ENCODE measurements at regions of chr17 and their contacts with region 1.

Region 1: DNA sequence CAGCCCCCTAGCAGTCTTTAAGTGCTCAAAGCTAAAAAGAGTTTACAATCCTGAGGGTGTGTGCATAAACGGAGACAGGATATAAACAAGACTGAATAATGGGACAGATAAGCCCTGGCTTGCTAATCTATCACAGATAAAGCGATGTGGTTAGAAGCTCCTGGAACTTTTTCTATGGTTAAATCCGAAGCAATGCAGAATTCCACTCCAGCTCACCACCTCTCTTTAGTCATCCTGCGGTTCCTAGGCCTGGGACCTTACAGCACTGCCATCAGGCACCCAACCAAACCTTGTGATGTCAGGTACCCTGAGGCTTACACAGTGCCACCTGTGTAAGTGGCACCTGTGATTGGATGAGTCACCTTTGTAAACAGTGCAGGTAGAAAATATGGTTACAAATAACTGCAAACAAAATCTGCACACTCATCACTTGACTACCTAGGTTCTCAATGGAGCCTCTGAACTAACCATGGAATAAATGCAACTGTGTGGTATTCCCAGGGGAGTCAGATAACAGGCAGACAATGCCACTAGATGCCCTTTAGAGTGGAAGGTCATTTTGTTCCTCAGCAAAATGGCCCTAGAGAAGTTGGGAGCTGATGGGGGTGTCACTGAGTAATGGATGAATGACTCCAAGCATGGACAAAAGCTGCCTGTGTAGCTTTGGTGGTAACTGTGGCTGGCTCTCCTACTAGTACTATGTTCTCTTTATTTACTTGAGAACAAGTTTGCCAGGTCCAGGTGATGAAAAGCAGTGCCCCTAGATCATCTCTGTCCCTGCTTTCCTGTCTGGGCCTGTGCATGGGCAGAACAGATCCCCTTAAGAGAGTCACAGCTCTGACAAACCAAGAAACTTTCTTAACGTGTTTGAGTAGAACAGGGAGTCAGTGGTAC is 31.3 kb upstream of the B4GALNT2 start:
- DNase-seq: no peak
- ATAC-seq: no peak
- H3K4me3 ChIP-seq: no peak overlapping the region
- H3K27ac ChIP-seq: no peak overlapping the region
- H3K4me1 ChIP-seq: no peaks in the 10 kb centered on the region
- H3K27me3 ChIP-seq: peaks cover 0 to 50% (median 16%) of the 10 kb centered on the region in 7 donors
- CTCF ChIP-seq: no peak

Region 2: GRCh38 chr17:49111934-49112333 is 10.6 kb after region 1 on chr17:
- intact Hi-C with region 1: loop called in 1 of 10 experiments (anchors 1 kb)
- DNase-seq: no peak
- ATAC-seq: no peak
- H3K4me3 ChIP-seq: no peak overlapping the region
- H3K27ac ChIP-seq: no peak overlapping the region
- H3K4me1 ChIP-seq: no peaks in the 10 kb centered on the region
- H3K27me3 ChIP-seq: peaks cover 0 to 22% (median 9%) of the 10 kb centered on the region in 7 donors
- CTCF ChIP-seq: no peak

Region 3: DNA sequence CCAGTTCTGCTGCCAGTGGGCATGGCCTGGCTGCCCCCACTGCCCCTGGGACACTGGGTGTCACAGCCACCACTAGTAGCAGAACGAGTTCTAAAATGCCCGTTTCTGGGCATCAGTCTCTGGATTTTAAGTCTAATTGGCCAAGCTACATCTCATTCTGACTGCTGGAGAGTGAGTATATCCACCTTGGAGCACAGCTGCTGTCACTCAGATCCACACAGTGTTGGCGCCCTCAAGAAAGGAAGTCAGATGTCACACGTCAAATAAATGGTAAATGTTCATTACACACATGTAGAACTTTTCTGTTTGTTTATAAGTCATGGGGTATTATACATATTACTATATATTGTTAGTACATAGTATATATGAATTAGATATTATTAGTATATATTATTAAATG is 89.6 kb after region 1 on chr17:
- intact Hi-C with region 1: no loop called
- DNase-seq: no peak
- ATAC-seq: no peak
- H3K4me3 ChIP-seq: no peak overlapping the region
- H3K27ac ChIP-seq: peak overlapping the region in 1 of 10 donors; percentile 97
- H3K4me1 ChIP-seq: peaks cover 0 to 22% (median 10%) of the 10 kb centered on the region in 9 donors
- H3K27me3 ChIP-seq: no peaks in the 10 kb centered on the region
- CTCF ChIP-seq: no peak